Activated CD4-positive, alpha-beta T cell treated with anti-CD3 and anti-CD28 coated beads for 36 hours (primary cell): ENCODE measurements at regions of chr17 and their contacts with region 1.

Region 1: GRCh38 chr17:29293890-29294579 is at the start of gene NUFIP2:
- DNase-seq: peak; percentile 99
- ATAC-seq: peak; percentile 93
- H3K4me3 Mint-ChIP-seq: peak within 1 kb of the TSS; percentile 100
- H3K27ac Mint-ChIP-seq: peak within 1 kb of the TSS; percentile 99
- H3K4me1 Mint-ChIP-seq: peaks cover 27% of the 10 kb centered on the region
- H3K27me3 Mint-ChIP-seq: no peaks in the 10 kb centered on the region
- total RNA-seq, gene NUFIP2: 55.1 to 93.1 TPM

Region 2: DNA sequence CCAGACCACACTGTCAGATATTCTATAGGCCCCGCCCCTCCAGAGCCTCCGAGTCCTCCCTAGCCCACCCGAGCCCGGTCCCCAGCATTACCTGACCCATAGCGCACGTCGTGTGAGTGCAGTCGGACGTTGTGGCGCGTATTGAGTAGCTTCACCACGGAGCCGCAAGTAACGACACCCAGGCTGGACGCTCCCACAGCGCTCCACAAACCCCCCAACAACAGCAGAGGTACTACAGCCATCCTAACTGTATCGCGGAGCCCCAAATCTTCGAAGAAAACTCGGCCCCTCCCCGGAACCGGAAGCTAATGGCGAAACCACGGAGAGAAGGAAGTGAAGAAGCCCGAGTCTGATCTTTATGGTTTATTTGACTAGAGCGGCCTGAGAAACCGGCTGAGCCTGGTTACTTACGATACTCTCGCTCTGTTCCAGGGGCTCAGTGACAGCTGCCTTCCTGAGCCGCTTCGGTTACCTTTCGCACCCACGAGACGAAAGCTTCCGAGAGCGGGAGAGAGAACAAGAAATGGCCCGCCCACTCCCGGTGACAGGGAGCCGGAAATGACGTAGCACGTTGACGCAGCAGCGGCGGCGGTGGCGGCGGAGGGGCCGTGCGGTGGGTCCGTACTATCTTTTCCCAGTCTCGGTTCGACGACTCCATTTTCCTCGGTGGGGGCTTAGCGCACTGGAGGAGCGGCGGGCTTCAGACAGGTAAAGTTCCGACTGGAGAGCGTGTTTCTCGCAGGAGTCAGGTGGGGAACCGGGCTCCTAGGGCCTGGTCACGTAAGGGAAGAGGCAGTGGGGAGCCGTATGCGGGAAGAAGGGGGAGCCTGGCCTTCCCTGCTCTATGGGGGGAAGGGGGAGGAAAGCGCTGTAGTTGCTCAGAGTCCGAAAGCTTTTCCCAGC is 632.1 kb before region 1 on chr17 and contains the starts of genes SDF2 and SUPT6H:
- CTCF ChIA-PET with region 1: no interaction called
- POLR2A ChIA-PET with region 1: no interaction called
- intact Hi-C with region 1: loop called in 1 of 2 experiments (anchors 5 kb)
- DNase-seq: peak; percentile 98
- ATAC-seq: peak; percentile 87
- H3K4me3 Mint-ChIP-seq: peak within 1 kb of the TSS; percentile 94
- H3K27ac Mint-ChIP-seq: peak within 1 kb of the TSS; percentile 99
- H3K4me1 Mint-ChIP-seq: peaks cover 48% of the 10 kb centered on the region
- H3K27me3 Mint-ChIP-seq: no peaks in the 10 kb centered on the region
- total RNA-seq, gene SDF2: 36.6 to 37.2 TPM
- total RNA-seq, gene SUPT6H: 80.6 to 85.8 TPM

Region 3: GRCh38 chr17:29116804-29117772 is 176.9 kb before region 1 on chr17:
- CTCF ChIA-PET with region 1: interaction called, 14 read pairs
- POLR2A ChIA-PET with region 1: no interaction called
- intact Hi-C with region 1: loop called in 1 of 2 experiments (anchors 5 kb)
- DNase-seq: peak; percentile 90
- ATAC-seq: peak; percentile 88
- H3K4me3 Mint-ChIP-seq: no peak overlapping the region
- H3K27ac Mint-ChIP-seq: no peak overlapping the region
- H3K4me1 Mint-ChIP-seq: peaks cover 5% of the 10 kb centered on the region
- H3K27me3 Mint-ChIP-seq: no peaks in the 10 kb centered on the region

Region 4: DNA sequence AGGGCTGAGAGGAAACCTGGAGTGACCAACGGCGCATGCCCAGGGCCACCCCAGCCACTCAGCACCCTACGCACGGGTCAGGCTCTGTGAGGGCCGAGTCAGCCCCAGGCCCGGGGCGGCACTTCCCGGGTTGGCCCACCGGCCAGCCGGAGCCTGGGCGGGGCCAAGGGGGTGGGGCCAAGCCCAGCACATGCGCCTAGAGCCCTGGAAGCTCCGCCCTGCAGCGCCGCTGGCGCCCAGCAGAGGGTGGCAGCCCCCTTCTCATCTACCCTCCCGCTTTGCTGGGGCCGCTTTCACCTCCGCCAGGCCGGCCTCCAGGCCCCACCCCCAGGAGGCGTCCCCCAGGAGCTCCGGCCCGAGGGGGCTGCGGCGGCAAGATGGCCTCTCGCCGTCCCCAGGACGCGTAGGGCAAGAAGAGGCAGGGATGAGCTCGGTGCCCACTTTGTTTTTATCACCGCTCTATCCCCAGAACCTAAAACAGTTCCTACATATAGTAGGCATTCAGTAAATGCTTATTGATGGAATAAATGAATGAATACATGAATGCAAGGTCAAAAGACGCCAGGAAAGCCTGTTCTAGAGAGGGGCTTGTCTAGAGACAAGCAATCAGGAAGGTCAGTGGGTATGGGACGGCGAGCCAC is 145.1 kb before region 1 on chr17:
- CTCF ChIA-PET with region 1: interaction called, 22 read pairs
- POLR2A ChIA-PET with region 1: interaction called, 6 read pairs
- intact Hi-C with region 1: loop called in 1 of 2 experiments (anchors 1 kb)
- DNase-seq: peak; percentile 96
- ATAC-seq: peak; percentile 93
- H3K4me3 Mint-ChIP-seq: peak overlapping the region; percentile 56
- H3K27ac Mint-ChIP-seq: peak overlapping the region; percentile 90
- H3K4me1 Mint-ChIP-seq: peaks cover 48% of the 10 kb centered on the region
- H3K27me3 Mint-ChIP-seq: no peaks in the 10 kb centered on the region

Region 5: DNA sequence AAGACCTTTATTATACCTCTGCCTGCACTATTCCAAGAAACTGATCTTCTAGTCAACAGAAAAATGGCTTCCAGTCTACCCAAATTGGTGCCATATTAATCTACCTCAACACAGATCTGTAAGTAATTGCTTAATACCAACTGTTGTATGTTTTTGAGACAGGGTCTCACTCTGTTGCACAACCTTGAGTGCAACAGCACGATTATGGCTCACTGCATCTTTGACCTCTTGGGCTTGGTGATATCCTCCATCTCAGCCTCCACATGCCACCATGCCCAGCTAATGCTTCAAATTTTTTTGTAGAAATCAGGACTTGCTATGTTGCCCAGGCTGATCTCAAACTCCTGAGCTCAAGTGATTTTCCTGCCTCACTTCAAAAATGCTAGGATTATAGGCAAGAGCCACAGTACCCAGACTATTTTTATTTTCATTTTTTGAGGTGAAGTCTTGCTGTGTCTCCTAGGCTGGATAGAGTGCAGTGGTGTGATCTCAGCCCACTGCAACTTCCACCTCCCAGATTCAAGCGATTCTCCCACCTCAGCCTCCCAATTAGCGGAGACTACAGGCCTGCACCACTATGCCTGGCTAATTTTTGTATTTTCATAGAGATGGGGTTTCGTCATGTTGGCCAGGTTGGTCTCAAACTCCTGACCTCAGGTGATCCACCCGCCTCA is 14.5 kb before region 1 on chr17:
- CTCF ChIA-PET with region 1: interaction called, 10 read pairs
- POLR2A ChIA-PET with region 1: interaction called, 9 read pairs
- intact Hi-C with region 1: no loop called
- DNase-seq: no peak
- ATAC-seq: no peak
- H3K4me3 Mint-ChIP-seq: no peak overlapping the region
- H3K27ac Mint-ChIP-seq: no peak overlapping the region
- H3K4me1 Mint-ChIP-seq: peaks cover 68% of the 10 kb centered on the region
- H3K27me3 Mint-ChIP-seq: no peaks in the 10 kb centered on the region

Region 6: GRCh38 chr17:29589524-29590410 is 295.7 kb after region 1 on chr17 and contains the start of gene GIT1:
- CTCF ChIA-PET with region 1: no interaction called
- POLR2A ChIA-PET with region 1: no interaction called
- intact Hi-C with region 1: loop called in 1 of 2 experiments (anchors 1 kb)
- DNase-seq: peak; percentile 92
- ATAC-seq: peak; percentile 69
- H3K4me3 Mint-ChIP-seq: peak within 1 kb of the TSS; percentile 94
- H3K27ac Mint-ChIP-seq: peak within 1 kb of the TSS; percentile 92
- H3K4me1 Mint-ChIP-seq: peaks cover 64% of the 10 kb centered on the region
- H3K27me3 Mint-ChIP-seq: no peaks in the 10 kb centered on the region
- total RNA-seq, gene GIT1: 60.5 to 74.1 TPM